Naive thymus-derived CD4-positive, alpha-beta T cell (primary cell): ENCODE measurements at regions of chr4 and their contacts with region 1.

Region 1: DNA sequence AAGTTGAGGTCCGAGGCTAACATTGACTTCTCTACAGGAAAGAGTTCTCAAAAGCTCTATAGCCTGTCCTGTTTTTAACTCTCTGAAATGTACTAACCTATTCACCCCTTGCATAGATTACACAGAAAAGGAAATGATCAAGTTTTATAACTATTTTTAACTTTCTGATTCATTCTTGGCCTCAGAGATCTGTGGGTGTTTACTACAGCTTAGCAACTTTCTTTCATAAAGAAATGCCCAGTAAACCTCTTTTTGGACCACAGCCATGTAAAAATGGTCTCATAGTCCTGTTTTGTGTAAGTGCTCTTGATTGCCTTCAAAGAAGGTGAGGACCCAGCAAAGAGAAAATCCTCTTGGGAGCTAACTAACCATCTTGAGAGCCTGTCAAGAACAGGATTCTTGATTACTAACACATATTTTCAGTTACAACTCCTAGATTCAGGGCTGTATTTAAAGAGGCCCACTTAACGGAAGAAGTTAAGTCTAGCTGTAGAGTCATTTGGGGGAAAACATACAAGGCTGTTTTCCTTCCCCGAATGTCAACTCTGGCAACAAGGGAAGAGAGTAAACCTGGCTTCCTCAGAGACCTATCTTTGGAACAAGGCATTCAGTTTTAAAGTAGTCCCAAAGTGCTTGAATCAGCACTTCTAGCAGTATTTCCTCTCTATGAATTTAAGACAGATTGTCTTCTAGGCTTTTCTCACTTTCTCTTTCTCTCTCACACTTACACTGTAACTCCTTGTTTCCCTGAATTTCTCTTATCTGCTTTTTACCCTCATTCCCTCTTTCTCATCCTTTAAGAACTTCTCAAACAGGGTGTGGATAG is 78.2 kb downstream of the IL21 start:
- DNase-seq: no peak
- ATAC-seq: no peak
- H3K4me3 ChIP-seq: no peak overlapping the region
- H3K4me3 Mint-ChIP-seq: peak overlapping the region in 1 of 10 donors; percentile 67
- H3K27ac ChIP-seq: no peak overlapping the region
- H3K27ac Mint-ChIP-seq: peak overlapping the region in 5 of 9 donors; percentile 4 to 92 (median 64)
- H3K4me1 ChIP-seq: peaks cover 8 to 35% of the 10 kb centered on the region in 2 donors
- H3K4me1 Mint-ChIP-seq: peaks cover 0 to 64% (median 16%) of the 10 kb centered on the region in 7 donors
- H3K27me3 ChIP-seq: no peaks in the 10 kb centered on the region
- H3K27me3 Mint-ChIP-seq: no peaks in the 10 kb centered on the region

Region 2: GRCh38 chr4:122423246-122423645 is 119.4 kb before region 1 on chr4:
- CTCF ChIA-PET with region 1: no interaction called
- POLR2A ChIA-PET with region 1: no interaction called
- intact Hi-C with region 1: no loop called
- DNase-seq: no peak
- ATAC-seq: no peak
- H3K4me3 ChIP-seq: no peak overlapping the region
- H3K4me3 Mint-ChIP-seq: no peak overlapping the region
- H3K27ac ChIP-seq: no peak overlapping the region
- H3K27ac Mint-ChIP-seq: no peak overlapping the region
- H3K4me1 ChIP-seq: no peaks in the 10 kb centered on the region
- H3K4me1 Mint-ChIP-seq: peaks cover 0 to 1% (median 0%) of the 10 kb centered on the region in 7 donors
- H3K27me3 ChIP-seq: no peaks in the 10 kb centered on the region
- H3K27me3 Mint-ChIP-seq: no peaks in the 10 kb centered on the region

Region 3: GRCh38 chr4:122508083-122508482 is 34.5 kb before region 1 on chr4:
- CTCF ChIA-PET with region 1: no interaction called
- POLR2A ChIA-PET with region 1: no interaction called
- intact Hi-C with region 1: loop called in 1 of 2 experiments (anchors 2 kb)
- DNase-seq: peak in 1 of 9 donors; percentile 4
- ATAC-seq: peak; percentile 49
- H3K4me3 ChIP-seq: no peak overlapping the region
- H3K4me3 Mint-ChIP-seq: peak overlapping the region in 6 of 10 donors; percentile 20 to 68 (median 24)
- H3K27ac ChIP-seq: no peak overlapping the region
- H3K27ac Mint-ChIP-seq: peak overlapping the region in 1 of 9 donors; percentile 81
- H3K4me1 ChIP-seq: no peaks in the 10 kb centered on the region
- H3K4me1 Mint-ChIP-seq: peaks cover 0 to 38% (median 10%) of the 10 kb centered on the region in 7 donors
- H3K27me3 ChIP-seq: no peaks in the 10 kb centered on the region
- H3K27me3 Mint-ChIP-seq: peaks cover 0 to 12% (median 0%) of the 10 kb centered on the region in 5 donors

Region 4: DNA sequence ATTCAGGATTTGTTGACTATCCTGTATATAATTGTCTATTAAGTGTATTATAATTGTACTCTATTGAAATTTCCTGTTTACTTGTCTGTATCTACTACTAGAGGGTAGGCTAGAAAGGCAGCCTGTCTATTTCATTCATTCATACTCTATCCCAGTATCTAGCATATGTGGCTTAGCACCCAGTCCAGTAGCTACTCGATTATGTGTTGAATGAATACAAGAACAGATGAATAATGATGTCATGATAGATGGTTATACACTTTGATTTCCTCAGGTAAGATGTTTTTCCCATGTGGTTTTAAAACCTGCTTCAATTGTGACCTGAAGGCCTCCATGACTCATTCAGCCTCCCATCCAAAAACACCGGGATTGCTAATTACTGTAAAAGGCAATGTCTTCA is 10.3 kb after region 1 on chr4:
- CTCF ChIA-PET with region 1: no interaction called
- POLR2A ChIA-PET with region 1: no interaction called
- intact Hi-C with region 1: loop called in 1 of 2 experiments (anchors 2 kb)
- DNase-seq: no peak
- ATAC-seq: no peak
- H3K4me3 ChIP-seq: no peak overlapping the region
- H3K4me3 Mint-ChIP-seq: no peak overlapping the region
- H3K27ac ChIP-seq: no peak overlapping the region
- H3K27ac Mint-ChIP-seq: no peak overlapping the region
- H3K4me1 ChIP-seq: no peaks in the 10 kb centered on the region
- H3K4me1 Mint-ChIP-seq: peaks cover 0 to 56% (median 0%) of the 10 kb centered on the region in 7 donors
- H3K27me3 ChIP-seq: no peaks in the 10 kb centered on the region
- H3K27me3 Mint-ChIP-seq: peaks cover 0 to 6% (median 0%) of the 10 kb centered on the region in 5 donors